ENCODE measurements at regions of chr4 and their contacts with region 1.

Region 1: DNA sequence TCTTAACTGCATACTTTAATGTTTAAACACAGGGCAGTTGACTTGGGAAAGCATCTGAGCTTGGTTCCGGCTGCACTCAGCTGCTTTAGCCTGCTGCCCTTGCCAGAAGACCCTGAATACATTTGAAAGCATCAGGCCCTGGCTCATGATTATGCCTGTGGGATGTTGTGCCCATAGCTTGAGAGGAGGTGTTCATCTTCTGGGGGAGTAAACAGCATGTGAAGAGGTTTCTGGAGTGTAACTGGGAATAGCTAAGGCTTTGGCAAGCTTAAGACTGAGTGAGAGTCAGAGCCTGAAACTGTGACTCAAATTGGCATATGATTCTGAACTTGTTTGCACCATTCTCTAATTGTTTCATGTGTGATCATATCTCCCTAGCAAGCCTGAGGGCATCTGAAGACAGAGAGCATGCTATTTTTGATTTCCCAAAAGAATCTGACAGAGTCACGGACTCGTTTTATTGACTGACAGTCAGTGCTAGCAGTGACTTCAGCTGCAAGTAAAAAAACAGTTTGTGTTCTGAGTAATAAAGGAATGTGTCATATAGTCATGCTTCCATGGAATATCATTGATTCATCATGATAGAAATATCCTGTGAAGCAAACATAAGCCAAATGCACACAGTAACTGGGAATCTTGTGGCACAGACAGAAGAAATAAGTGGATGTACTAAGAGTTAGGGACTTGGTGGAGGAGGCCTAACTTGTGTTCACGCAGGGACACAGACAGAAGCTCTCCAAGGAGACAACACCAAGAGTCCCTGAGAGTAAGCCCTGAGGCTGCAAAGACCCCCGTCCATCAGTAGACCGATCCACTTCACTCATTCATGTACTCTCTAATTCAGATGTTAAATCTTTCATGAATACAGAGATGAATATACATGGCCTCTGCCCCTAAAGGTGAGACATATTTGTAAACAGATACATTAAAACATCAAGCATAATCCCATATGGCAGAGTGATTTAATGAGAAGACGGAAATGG is 100.7 kb downstream of the SYNPO2 start:
- DNase-seq: no peak
- ATAC-seq: peak in 6 of 8 donors; percentile 23 to 73 (median 39)
- H3K4me3 ChIP-seq: no peak overlapping the region
- H3K27ac ChIP-seq: peak overlapping the region in 9 of 10 donors; percentile 36 to 79 (median 68)
- H3K4me1 ChIP-seq: peaks cover 10 to 87% (median 58%) of the 10 kb centered on the region in 9 donors
- H3K27me3 ChIP-seq: no peaks in the 10 kb centered on the region
- CTCF ChIP-seq: no peak

Region 2: DNA sequence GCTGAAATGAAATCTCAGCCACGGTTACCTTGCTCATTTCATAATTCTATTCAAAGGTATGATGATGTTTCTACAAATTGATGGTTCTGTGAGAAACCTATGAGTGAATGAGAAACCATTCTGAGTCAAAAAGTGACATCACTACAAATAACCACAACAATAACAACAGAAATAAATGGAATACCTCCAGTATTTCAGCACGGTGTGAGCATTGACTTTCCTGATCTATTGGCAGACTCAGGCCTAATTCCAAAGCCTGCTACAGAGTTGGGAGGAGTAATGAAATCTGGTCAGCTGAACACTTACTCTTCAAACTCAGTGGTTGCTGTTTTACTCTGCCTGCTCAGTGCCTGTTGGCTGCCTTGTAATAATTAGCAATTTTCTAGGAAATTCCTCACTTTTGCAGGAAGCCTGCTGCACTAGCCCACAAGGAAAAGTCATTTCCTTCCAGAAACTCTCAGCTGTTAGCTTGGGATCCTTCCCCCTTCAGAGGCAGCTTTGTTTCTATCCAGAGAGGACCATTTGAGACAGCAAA is 119.5 kb before region 1 on chr4:
- intact Hi-C with region 1: no loop called
- DNase-seq: peak in 1 of 2 donors; percentile 25
- ATAC-seq: peak; percentile 37 to 86 (median 70)
- H3K4me3 ChIP-seq: no peak overlapping the region
- H3K27ac ChIP-seq: peak overlapping the region in 5 of 10 donors; percentile 6 to 42 (median 35)
- H3K4me1 ChIP-seq: peaks cover 2 to 27% (median 15%) of the 10 kb centered on the region in 9 donors
- H3K27me3 ChIP-seq: no peaks in the 10 kb centered on the region
- CTCF ChIP-seq: no peak

Region 3: DNA sequence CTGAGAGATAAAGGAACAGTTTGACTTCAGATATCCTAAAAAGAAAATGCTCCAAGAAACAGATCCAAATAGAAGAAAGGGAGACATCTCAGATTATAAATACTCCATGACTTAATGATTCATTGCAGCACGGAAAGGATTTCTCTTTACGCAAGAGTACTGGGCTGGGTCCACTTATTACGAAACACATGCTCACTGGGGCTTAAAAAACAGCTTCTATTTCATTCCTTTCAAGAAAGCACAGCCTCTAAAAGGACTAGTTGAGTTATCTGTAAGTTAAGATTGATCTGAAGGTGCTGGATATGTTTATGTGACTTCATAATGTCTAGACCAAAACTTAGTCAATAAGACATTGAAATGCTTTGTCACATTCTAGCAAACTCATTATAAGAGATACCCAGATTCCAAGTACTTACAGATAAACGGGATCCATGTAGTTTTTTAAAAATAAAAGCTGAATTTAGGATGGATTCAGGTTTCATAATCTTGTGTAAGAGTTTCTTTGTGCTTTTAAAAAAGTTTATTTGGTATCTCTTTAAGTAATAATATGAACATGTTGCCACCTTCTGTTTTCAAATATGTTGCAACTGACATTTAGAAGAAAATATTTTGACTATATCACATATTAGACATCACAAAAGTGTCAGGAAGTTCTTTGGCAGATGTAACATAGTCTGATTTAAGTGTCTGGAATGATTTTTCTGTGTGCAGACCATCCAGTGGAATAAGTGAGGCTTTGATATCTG is 36.7 kb after region 1 on chr4:
- intact Hi-C with region 1: loop called in 4 of 10 experiments (anchors 5 to 10 kb)
- DNase-seq: peak in 1 of 2 donors; percentile 50
- ATAC-seq: peak; percentile 69 to 91 (median 89)
- H3K4me3 ChIP-seq: peak overlapping the region in 4 of 10 donors; percentile 5 to 40 (median 23)
- H3K27ac ChIP-seq: peak overlapping the region; percentile 41 to 92 (median 86)
- H3K4me1 ChIP-seq: peaks cover 7 to 65% (median 43%) of the 10 kb centered on the region in 9 donors
- H3K27me3 ChIP-seq: no peaks in the 10 kb centered on the region
- CTCF ChIP-seq: peak in 1 of 9 donors; percentile 12

Region 4: DNA sequence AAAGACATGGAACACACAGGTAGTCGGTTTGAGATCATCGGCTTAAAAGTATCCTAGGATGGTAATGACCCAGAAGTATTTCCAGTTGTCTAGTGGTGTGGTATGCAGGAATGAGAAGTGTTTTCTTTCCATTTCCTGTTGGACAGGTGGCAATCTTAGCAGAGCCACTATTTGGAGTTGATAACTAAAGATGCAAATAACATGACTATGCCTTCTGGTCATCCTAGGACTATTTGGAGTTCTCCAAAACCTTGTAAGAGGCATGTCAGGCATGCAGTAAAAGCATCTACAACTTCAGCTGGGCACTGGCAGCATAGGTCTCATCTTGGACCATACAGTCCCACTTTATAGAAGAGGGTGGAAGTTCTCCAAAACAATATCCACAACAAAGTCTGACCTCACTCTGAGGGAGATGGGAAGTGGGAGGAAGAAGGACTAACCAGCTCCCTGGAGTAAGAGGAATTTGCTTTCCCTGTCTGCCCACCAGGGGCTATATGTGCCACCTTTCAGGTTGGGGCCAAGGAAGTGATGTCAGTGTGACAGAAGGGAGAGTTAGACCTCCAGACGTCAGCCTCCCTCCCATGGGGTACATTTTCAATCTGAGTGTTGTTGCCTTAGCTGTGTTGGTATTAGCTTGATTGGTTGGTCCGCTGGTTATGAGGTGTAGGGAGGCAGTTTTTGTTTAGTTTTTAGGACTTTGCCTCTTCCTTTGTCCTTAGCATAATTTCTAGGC is 45.1 kb after region 1 on chr4:
- intact Hi-C with region 1: loop called in 4 of 10 experiments (anchors 5 to 10 kb)
- DNase-seq: no peak
- ATAC-seq: peak in 2 of 8 donors; percentile 3 to 10
- H3K4me3 ChIP-seq: no peak overlapping the region
- H3K27ac ChIP-seq: peak overlapping the region in 8 of 10 donors; percentile 23 to 69 (median 46)
- H3K4me1 ChIP-seq: peaks cover 0 to 62% (median 51%) of the 10 kb centered on the region in 9 donors
- H3K27me3 ChIP-seq: no peaks in the 10 kb centered on the region
- CTCF ChIP-seq: no peak

Measured in heart right ventricle (tissue), 16 donors.